ENCODE measurements at regions of chr22 and their contacts with region 1.

Region 1: GRCh38 chr22:34829485-34829884 is 236.5 kb upstream of the ISX start:
- DNase-seq: no peak
- ATAC-seq: no peak
- H3K4me3 ChIP-seq: no peak overlapping the region
- H3K27ac ChIP-seq: no peak overlapping the region
- H3K4me1 ChIP-seq: no peaks in the 10 kb centered on the region
- H3K27me3 ChIP-seq: no peaks in the 10 kb centered on the region
- CTCF ChIP-seq: no peak
- POLR2A ChIP-seq: no peak

Region 2: GRCh38 chr22:34709641-34710040 is 119.8 kb before region 1 on chr22:
- in situ Hi-C with region 1: no loop called
- intact Hi-C with region 1: no loop called
- DNase-seq: no peak
- ATAC-seq: no peak
- H3K4me3 ChIP-seq: no peak overlapping the region
- H3K27ac ChIP-seq: no peak overlapping the region
- H3K4me1 ChIP-seq: no peaks in the 10 kb centered on the region
- H3K27me3 ChIP-seq: no peaks in the 10 kb centered on the region
- CTCF ChIP-seq: no peak
- POLR2A ChIP-seq: no peak

Region 3: DNA sequence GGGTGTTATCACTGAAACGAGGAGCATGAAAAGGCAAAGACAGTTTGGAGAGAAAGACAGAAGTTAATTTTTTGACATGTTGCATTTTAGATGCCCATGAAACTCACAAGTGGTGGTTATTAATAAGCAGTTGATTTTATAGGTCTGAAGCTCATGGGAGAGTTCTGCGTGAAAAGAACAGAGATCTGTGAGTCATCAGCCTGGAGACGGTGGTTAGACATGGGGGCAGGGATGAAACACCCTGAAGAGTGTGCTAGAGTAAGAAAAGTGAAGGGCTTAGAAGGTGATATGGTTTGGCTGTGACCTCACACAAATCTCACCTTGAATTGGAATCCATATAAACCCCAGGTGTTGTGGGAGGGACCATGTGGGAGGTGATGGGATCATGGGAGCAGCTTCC is 52.7 kb before region 1 on chr22:
- in situ Hi-C with region 1: loop called in 1 of 4 experiments (anchors 10 kb)
- intact Hi-C with region 1: no loop called
- DNase-seq: no peak
- ATAC-seq: no peak
- H3K4me3 ChIP-seq: no peak overlapping the region
- H3K27ac ChIP-seq: no peak overlapping the region
- H3K4me1 ChIP-seq: no peaks in the 10 kb centered on the region
- H3K27me3 ChIP-seq: no peaks in the 10 kb centered on the region
- CTCF ChIP-seq: no peak
- POLR2A ChIP-seq: no peak

Region 4: GRCh38 chr22:34798605-34799004 is 30.9 kb before region 1 on chr22:
- in situ Hi-C with region 1: no loop called
- intact Hi-C with region 1: no loop called
- DNase-seq: peak in 1 of 2 donors; percentile 13
- ATAC-seq: no peak
- H3K4me3 ChIP-seq: no peak overlapping the region
- H3K27ac ChIP-seq: no peak overlapping the region
- H3K4me1 ChIP-seq: no peaks in the 10 kb centered on the region
- H3K27me3 ChIP-seq: peaks cover 0 to 4% (median 0%) of the 10 kb centered on the region in 3 donors
- CTCF ChIP-seq: no peak
- POLR2A ChIP-seq: no peak

Region 5: DNA sequence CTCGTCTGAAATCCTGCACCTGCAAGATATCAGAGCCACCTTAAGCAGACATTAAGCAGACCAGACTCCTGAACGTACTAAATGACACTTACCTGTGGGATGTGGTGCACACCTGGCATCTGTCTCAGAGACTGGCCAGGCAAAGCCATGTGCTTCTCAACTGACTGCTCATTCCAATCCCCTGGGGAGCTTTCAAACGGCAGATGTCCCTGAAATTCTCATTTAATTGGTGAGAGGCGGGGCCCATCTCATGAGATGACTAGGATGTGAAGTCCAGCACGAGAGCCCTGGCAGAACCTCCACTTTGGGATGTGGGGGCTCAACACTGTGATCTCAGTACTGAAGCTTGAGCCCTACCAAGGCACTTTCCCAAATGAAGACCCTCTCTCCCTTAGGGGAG is 343.0 kb after region 1 on chr22:
- in situ Hi-C with region 1: no loop called
- intact Hi-C with region 1: no loop called
- DNase-seq: no peak
- ATAC-seq: no peak
- H3K4me3 ChIP-seq: no peak overlapping the region
- H3K27ac ChIP-seq: no peak overlapping the region
- H3K4me1 ChIP-seq: no peaks in the 10 kb centered on the region
- H3K27me3 ChIP-seq: peaks cover 0 to 3% (median 0%) of the 10 kb centered on the region in 3 donors
- CTCF ChIP-seq: no peak
- POLR2A ChIP-seq: no peak